Activated CD8-positive, alpha-beta T cell treated with anti-CD3 and anti-CD28 coated beads for 36 hours (primary cell): ENCODE measurements at regions of chr14 and their contacts with region 1.

Region 1: GRCh38 chr14:75709207-75709812 is 48.3 kb downstream of the TTLL5 start:
- DNase-seq: peak; percentile 80
- ATAC-seq: peak; percentile 61
- H3K4me3 Mint-ChIP-seq: no peak overlapping the region
- H3K27ac Mint-ChIP-seq: no peak overlapping the region
- H3K4me1 Mint-ChIP-seq: no peaks in the 10 kb centered on the region
- H3K27me3 Mint-ChIP-seq: no peaks in the 10 kb centered on the region
- CTCF ChIP-seq: peak; percentile 85

Region 2: GRCh38 chr14:75648066-75648838 is 61.1 kb before region 1 on chr14:
- CTCF ChIA-PET with region 1: no interaction called
- POLR2A ChIA-PET with region 1: no interaction called
- intact Hi-C with region 1: no loop called
- DNase-seq: no peak
- ATAC-seq: no peak
- H3K4me3 Mint-ChIP-seq: no peak overlapping the region
- H3K27ac Mint-ChIP-seq: no peak overlapping the region
- H3K4me1 Mint-ChIP-seq: no peaks in the 10 kb centered on the region
- H3K27me3 Mint-ChIP-seq: no peaks in the 10 kb centered on the region
- CTCF ChIP-seq: no peak

Region 3: DNA sequence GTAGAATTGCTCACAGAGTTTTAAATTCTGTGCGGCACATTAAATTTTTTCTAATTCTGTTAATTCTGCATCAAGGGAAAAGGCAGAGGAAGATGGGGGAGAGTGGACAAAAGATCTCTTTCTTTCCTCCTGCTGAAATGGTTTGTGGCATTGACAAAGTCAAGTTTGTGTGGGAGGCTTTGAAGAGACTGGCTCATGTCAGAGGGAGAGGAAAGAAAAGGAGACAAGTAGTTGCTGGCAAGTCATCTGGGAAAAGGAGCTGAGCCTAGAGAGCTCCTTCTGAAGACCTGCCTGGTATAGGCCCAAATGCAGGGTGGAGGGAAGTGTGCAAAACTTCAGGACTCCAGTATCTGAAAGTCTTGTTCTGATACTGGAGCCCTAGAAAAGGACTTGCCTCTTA is 11.9 kb before region 1 on chr14:
- CTCF ChIA-PET with region 1: interaction called, 12 read pairs
- POLR2A ChIA-PET with region 1: no interaction called
- intact Hi-C with region 1: no loop called
- DNase-seq: no peak
- ATAC-seq: no peak
- H3K4me3 Mint-ChIP-seq: no peak overlapping the region
- H3K27ac Mint-ChIP-seq: no peak overlapping the region
- H3K4me1 Mint-ChIP-seq: no peaks in the 10 kb centered on the region
- H3K27me3 Mint-ChIP-seq: no peaks in the 10 kb centered on the region
- CTCF ChIP-seq: no peak

Region 4: DNA sequence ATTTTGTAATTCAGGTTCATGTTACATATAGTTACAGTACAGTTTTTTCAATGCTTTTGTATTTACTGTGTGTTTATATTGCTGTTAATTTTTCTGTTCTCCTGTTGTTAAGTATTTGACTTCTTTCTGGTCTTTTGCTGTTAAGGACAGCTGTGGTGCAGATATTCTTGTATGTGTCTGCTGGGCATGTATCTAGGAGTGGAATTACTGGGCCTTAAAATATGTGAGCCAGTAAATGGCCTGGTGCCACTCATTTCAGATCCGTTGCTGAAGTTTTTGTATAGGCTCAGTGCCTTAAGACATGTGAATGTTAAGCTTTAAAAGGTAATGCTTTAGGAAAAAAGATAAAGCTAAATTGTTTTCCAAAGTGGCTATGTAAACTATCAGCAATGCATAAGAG is 39.0 kb after region 1 on chr14:
- CTCF ChIA-PET with region 1: interaction called, 16 read pairs
- POLR2A ChIA-PET with region 1: no interaction called
- intact Hi-C with region 1: no loop called
- DNase-seq: no peak
- ATAC-seq: no peak
- H3K4me3 Mint-ChIP-seq: no peak overlapping the region
- H3K27ac Mint-ChIP-seq: no peak overlapping the region
- H3K4me1 Mint-ChIP-seq: no peaks in the 10 kb centered on the region
- H3K27me3 Mint-ChIP-seq: no peaks in the 10 kb centered on the region
- CTCF ChIP-seq: no peak

Region 5: GRCh38 chr14:75879031-75879430 is 169.7 kb after region 1 on chr14:
- CTCF ChIA-PET with region 1: interaction called, 15 read pairs
- POLR2A ChIA-PET with region 1: no interaction called
- intact Hi-C with region 1: no loop called
- DNase-seq: no peak
- ATAC-seq: peak; percentile 69
- H3K4me3 Mint-ChIP-seq: no peak overlapping the region
- H3K27ac Mint-ChIP-seq: no peak overlapping the region
- H3K4me1 Mint-ChIP-seq: peaks cover 9% of the 10 kb centered on the region
- H3K27me3 Mint-ChIP-seq: no peaks in the 10 kb centered on the region
- CTCF ChIP-seq: no peak

Region 6: GRCh38 chr14:75968456-75968855 is 259.1 kb after region 1 on chr14:
- CTCF ChIA-PET with region 1: interaction called, 15 read pairs
- POLR2A ChIA-PET with region 1: no interaction called
- intact Hi-C with region 1: no loop called
- DNase-seq: no peak
- ATAC-seq: no peak
- H3K4me3 Mint-ChIP-seq: no peak overlapping the region
- H3K27ac Mint-ChIP-seq: no peak overlapping the region
- H3K4me1 Mint-ChIP-seq: no peaks in the 10 kb centered on the region
- H3K27me3 Mint-ChIP-seq: no peaks in the 10 kb centered on the region
- CTCF ChIP-seq: no peak

Region 7: GRCh38 chr14:76918751-76919543 is 1209.6 kb after region 1 on chr14:
- CTCF ChIA-PET with region 1: no interaction called
- POLR2A ChIA-PET with region 1: no interaction called
- intact Hi-C with region 1: no loop called
- DNase-seq: peak; percentile 42
- ATAC-seq: no peak
- H3K4me3 Mint-ChIP-seq: peak overlapping the region; percentile 34
- H3K27ac Mint-ChIP-seq: peak overlapping the region; percentile 43
- H3K4me1 Mint-ChIP-seq: peaks cover 46% of the 10 kb centered on the region
- H3K27me3 Mint-ChIP-seq: no peaks in the 10 kb centered on the region
- CTCF ChIP-seq: no peak